BJ (cell line): ENCODE measurements at regions of chr20 and their contacts with region 1.

Region 1: DNA sequence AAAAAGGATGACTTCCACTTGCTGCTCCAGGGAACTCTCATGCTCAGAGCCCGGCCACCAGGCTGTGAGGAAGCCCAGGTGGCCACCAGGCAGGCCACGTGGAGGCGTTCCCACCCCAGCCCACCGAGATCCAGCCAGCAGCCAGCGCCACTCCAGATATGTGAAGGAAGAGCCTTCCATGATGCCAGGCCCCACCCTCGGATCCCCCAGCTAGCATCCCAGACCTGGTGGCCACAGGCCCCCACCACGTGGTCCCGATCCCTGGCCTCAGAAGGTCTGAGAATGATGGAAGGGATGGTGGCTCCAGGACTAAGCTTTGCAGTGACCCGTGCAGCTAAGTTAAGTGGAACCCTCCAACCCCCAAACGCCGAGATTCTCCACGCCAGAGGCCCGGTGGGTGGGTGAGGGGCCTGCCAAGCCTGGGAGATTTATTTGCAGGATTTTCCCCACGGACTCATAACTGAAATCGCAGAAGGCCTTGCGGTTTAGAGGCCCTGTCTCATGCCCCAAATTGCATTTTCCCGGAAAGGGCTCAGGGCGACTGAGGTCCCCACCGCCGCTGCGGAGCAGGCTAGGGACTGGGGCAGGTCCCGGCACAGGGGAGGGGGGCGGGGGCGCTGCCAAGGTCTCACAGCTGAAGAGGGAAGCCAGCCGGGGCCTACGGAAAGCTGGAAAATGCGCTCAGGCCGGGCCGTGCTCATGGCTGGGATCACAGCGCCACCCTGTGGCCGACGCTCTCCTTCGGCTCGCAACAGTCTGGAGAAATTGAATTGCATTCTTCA is 31.1 kb upstream of the CST7 start:
- DNase-seq: no peak
- H3K4me3 ChIP-seq: no peak overlapping the region
- H3K27me3 ChIP-seq: peaks cover 1% of the 10 kb centered on the region; the same call in 1 of the 2 replicates
- CTCF ChIP-seq: peak; percentile 87

Region 2: DNA sequence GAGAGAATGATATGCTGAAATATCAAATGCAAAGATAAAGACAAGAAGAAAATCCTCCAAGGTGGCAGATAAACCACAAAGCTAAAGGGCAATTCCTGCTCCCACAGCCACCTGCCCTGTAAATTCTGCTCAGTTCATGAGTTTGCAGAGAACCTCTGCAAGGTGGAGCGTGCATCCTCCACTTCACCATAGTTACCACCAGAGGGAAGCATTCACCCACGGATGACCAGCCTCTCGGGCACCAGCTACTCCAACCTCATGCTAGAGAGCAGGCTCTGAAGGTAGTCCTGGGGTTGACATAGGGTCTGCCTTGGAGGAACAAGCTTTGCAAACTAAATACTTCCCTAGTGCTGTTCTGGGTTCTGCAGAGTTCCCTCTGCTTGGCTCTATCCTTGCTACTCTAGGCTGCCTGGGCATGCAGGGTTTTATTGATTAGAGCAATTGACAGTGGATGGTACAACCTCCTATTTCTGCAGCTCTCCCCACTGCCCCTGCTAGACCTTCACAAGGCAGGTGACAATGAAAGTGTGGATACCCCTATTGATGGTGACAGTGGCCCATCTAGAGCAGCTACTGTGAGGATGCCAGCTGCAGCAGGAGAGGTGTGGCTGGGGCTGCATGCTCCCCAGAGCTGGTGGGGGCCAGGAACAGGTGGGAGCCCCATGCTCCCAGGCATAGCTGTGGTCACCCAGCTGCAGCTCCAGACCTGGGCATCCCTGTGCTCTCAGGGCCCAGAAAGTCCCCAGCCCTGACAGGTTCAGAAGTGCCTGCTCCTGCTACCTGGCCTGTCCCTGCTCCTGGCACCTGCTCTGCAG is 980.5 kb before region 1 on chr20:
- CTCF ChIA-PET with region 1: interaction called, 11 read pairs
- POLR2A ChIA-PET with region 1: no interaction called
- DNase-seq: no peak
- H3K4me3 ChIP-seq: no peak overlapping the region
- H3K27me3 ChIP-seq: no peaks in the 10 kb centered on the region
- CTCF ChIP-seq: peak; percentile 82

Region 3: DNA sequence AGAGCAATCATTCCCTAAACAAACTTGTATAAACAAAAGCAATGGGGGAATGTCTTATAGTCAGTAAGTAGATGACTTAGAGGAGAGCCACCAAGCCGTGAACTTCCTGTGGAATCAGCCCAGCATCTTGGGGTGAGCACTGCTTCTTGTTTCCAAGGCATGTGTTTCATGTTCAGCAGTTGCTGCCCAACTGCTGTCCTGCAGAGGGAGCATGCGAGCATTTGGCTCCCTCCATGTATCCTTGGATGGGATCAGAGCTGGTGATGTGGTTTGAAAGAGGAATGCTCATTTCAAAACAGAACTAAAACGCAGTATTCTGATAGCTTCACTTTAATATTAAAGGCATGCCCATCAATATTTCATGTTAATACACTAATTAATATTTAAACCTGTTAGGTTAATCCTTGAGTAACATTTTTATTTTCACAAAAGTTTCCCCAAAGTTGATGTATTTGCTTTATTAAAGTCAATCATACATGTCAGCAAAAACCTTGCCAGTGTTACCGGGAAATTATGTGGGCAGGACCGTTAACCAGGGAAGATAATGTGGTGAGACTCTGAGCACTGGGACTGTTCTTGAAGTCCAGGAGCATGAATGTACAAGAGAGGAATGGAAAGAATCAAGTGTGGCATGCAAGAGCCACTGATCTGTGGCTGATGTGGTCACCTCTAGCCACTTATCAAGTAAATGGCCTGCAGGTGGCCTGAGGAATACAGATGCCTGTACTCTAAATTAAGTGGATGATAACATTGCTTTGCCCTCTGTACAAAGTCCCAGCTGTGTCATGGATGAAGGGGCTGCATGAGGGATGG is 757.2 kb before region 1 on chr20:
- CTCF ChIA-PET with region 1: interaction called, 43 read pairs
- POLR2A ChIA-PET with region 1: no interaction called
- DNase-seq: peak; percentile 16
- H3K4me3 ChIP-seq: no peak overlapping the region
- H3K27me3 ChIP-seq: no peaks in the 10 kb centered on the region; the same call in 1 of the 2 replicates
- CTCF ChIP-seq: peak; percentile 91

Region 4: GRCh38 chr20:24303381-24303780 is 614.6 kb before region 1 on chr20:
- CTCF ChIA-PET with region 1: interaction called, 13 read pairs
- POLR2A ChIA-PET with region 1: no interaction called
- DNase-seq: no peak
- H3K4me3 ChIP-seq: no peak overlapping the region
- H3K27me3 ChIP-seq: no peaks in the 10 kb centered on the region; the same call in 1 of the 2 replicates
- CTCF ChIP-seq: peak; percentile 32

Region 5: GRCh38 chr20:24934101-24934661 is 16.2 kb after region 1 on chr20:
- CTCF ChIA-PET with region 1: interaction called, 48 read pairs
- POLR2A ChIA-PET with region 1: no interaction called
- DNase-seq: no peak
- H3K4me3 ChIP-seq: no peak overlapping the region
- H3K27me3 ChIP-seq: no peaks in the 10 kb centered on the region
- CTCF ChIP-seq: no peak

Region 6: DNA sequence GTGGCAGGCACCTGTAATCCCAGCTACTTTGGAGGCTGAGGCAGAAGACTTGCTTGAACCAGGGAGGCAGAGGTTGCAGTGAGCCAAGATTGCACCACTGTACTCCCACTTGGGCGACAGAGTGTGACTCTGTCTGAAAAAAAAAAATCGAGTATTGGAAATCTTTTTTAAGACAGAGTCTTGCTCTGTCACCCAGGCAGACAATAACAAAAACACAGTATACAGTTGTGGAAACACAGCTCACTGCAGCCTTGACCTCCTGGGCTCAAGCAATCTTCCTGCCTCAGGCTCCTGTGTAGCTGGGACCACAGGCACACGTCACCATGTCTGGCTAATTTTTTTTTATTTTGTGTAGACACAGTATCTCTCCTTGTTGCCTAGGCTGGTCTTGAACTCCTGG is 690.8 kb after region 1 on chr20:
- CTCF ChIA-PET with region 1: no interaction called
- POLR2A ChIA-PET with region 1: no interaction called
- DNase-seq: no peak
- H3K4me3 ChIP-seq: no peak overlapping the region
- H3K27me3 ChIP-seq: no peaks in the 10 kb centered on the region
- CTCF ChIP-seq: no peak